HCT116 (cell line): ENCODE measurements at regions of chr2 and their contacts with region 1.

Region 1: DNA sequence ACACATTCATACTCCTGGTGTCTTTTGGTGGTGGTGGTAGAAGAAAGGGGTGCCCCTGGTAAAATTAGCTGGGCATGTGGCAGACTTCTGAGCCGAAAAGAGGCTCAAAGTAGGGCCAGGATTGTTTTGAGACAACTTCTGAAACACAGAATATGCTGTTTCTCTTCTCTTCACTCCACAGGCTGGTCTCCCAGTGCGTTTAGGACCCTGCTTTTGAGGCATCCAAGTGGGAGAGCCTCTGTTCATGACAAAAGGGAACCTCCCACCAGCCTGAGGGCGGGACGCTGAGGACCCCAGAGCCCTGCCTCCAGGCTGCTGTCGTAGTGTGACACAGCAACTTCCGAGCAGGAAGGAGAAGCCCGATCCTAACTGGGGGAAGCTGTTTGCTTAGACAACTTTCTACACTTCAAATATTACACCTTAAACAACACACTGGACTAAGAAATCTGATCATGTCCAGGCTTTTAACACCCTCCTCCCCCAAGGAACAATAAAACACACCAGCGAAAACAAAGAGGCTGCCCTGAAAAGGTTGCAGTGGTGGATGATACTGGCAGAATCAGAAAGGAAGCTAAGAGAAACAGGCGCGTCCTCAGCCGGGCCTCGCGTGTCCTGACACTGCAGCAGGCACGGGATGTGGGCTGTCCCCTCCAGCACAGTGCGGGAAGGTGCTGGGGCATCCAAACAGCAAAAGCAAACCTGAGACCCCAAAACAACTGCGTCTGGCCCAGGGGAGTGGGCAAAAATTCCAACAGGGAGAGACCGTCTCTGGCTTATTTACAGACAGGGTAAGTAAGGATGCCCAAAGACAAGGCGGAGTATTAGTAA is 9.3 kb downstream of the SERTAD2 start:
- DNase-seq: peak; percentile 59
- ATAC-seq: peak; percentile 77
- H3K4me3 ChIP-seq: peak overlapping the region; percentile 46 to 57
- H3K27ac ChIP-seq: peak overlapping the region; percentile 95
- H3K4me1 ChIP-seq: peaks cover 74 to 100% of the 10 kb centered on the region in 2 experiments
- H3K27me3 ChIP-seq: no peaks in the 10 kb centered on the region
- CTCF ChIP-seq: no peak
- POLR2A ChIP-seq: peak; percentile 47
- RAD21 ChIP-seq: no peak

Region 2: DNA sequence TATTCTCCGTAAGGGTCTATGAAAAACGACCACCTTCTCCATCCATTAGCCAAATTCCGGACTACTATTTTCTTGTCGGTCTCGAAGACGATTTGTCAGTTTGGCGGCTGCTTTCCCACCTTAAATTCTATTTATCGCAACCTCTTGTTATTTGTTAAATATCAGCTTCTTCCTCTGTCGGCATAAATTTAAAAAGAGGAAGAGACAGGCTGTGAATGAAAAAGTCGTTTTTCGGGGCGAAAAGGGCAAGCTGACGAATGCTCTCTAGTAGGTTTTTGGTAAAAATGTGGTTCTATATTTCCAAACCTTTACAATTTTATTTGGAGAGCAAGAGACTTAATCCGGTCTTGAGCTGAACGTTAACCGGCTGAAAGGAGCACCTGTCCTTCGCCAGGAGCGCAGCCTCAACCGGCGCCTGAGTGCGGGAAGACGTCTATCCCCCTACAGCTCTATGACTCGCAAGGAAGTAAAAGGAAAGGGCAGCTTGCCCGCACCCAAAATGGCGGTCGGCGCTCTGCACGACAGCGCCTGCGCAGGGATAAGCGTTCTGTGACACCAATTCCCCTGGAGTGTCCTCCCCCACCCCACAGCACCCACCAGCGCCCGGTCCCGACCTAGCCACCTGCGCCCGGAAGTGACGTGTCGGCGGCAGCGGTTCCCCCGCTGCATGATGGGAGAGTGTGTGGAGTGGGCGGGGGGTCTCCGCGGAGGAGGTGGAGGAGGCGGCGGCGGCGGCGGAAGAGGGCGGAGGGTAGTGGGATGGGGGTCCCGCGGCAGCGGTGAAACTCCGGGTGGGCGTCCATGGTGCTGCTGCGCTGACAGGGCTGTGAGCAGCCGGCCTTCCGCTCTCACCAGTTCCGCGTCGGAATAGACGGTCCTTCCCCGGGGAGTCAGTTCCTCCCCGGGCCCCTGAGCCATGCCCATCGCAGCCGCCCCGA is 120.5 kb before region 1 on chr2 and contains the start of gene AFTPH:
- CTCF ChIA-PET with region 1: interaction called, 10 read pairs
- POLR2A ChIA-PET with region 1: no interaction called
- RAD21 ChIA-PET with region 1: no interaction called
- intact Hi-C with region 1: loop called (anchors 5 kb)
- DNase-seq: peak; percentile 96
- ATAC-seq: peak; percentile 95
- H3K4me3 ChIP-seq: peak within 1 kb of the TSS; percentile 70 to 91
- H3K27ac ChIP-seq: peak within 1 kb of the TSS; percentile 78
- H3K4me1 ChIP-seq: peaks cover 6 to 20% of the 10 kb centered on the region in 2 experiments; a peak in 3 of 4 replicates
- H3K27me3 ChIP-seq: no peaks in the 10 kb centered on the region
- CTCF ChIP-seq: no peak
- POLR2A ChIP-seq: peak; percentile 75
- RAD21 ChIP-seq: no peak
- total RNA-seq, gene AFTPH: 23.6 TPM

Region 3: GRCh38 chr2:64685438-64685837 is 41.0 kb after region 1 on chr2:
- CTCF ChIA-PET with region 1: no interaction called
- POLR2A ChIA-PET with region 1: no interaction called
- RAD21 ChIA-PET with region 1: no interaction called
- intact Hi-C with region 1: no loop called
- DNase-seq: no peak
- ATAC-seq: no peak
- H3K4me3 ChIP-seq: no peak overlapping the region
- H3K27ac ChIP-seq: no peak overlapping the region
- H3K4me1 ChIP-seq: peaks cover 0 to 6% of the 10 kb centered on the region in 2 experiments; a peak in 2 of 4 replicates
- H3K27me3 ChIP-seq: no peaks in the 10 kb centered on the region
- CTCF ChIP-seq: no peak
- POLR2A ChIP-seq: no peak
- RAD21 ChIP-seq: no peak

Region 4: GRCh38 chr2:64831134-64831976 is 187.0 kb after region 1 on chr2:
- CTCF ChIA-PET with region 1: interaction called, 7 read pairs
- POLR2A ChIA-PET with region 1: interaction called, 3 read pairs
- RAD21 ChIA-PET with region 1: no interaction called
- intact Hi-C with region 1: loop called (anchors 1 kb)
- DNase-seq: peak; percentile 98
- ATAC-seq: peak; percentile 89
- H3K4me3 ChIP-seq: peak overlapping the region; percentile 21 to 44; a peak in 3 of 4 replicates
- H3K27ac ChIP-seq: peak overlapping the region; percentile 80
- H3K4me1 ChIP-seq: peaks cover 52 to 71% of the 10 kb centered on the region in 2 experiments
- H3K27me3 ChIP-seq: no peaks in the 10 kb centered on the region
- CTCF ChIP-seq: peak in 2 of 3 experiments; percentile 98 to 99; a peak in 4 of 6 replicates
- POLR2A ChIP-seq: peak; percentile 40
- RAD21 ChIP-seq: no peak

Region 5: GRCh38 chr2:64859312-64860212 is 215.2 kb after region 1 on chr2:
- CTCF ChIA-PET with region 1: interaction called, 16 read pairs
- POLR2A ChIA-PET with region 1: interaction called, 4 read pairs
- RAD21 ChIA-PET with region 1: interaction called in 1 of 2 experiments, 4 read pairs
- intact Hi-C with region 1: no loop called
- DNase-seq: peak; percentile 63
- ATAC-seq: peak; percentile 83
- H3K4me3 ChIP-seq: peak overlapping the region; percentile 34 to 47
- H3K27ac ChIP-seq: peak overlapping the region; percentile 97
- H3K4me1 ChIP-seq: peaks cover 42 to 83% of the 10 kb centered on the region in 2 experiments
- H3K27me3 ChIP-seq: no peaks in the 10 kb centered on the region
- CTCF ChIP-seq: peak in 1 of 3 experiments; percentile 19; a peak in 1 of 6 replicates
- POLR2A ChIP-seq: peak; percentile 46
- RAD21 ChIP-seq: no peak

Region 6: GRCh38 chr2:64873472-64873924 is 229.1 kb after region 1 on chr2:
- CTCF ChIA-PET with region 1: interaction called, 4 read pairs
- POLR2A ChIA-PET with region 1: no interaction called
- RAD21 ChIA-PET with region 1: no interaction called
- intact Hi-C with region 1: loop called (anchors 2 kb)
- DNase-seq: peak; percentile 51
- ATAC-seq: peak; percentile 92
- H3K4me3 ChIP-seq: no peak overlapping the region
- H3K27ac ChIP-seq: no peak overlapping the region
- H3K4me1 ChIP-seq: peaks cover 8 to 32% of the 10 kb centered on the region in 2 experiments
- H3K27me3 ChIP-seq: no peaks in the 10 kb centered on the region
- CTCF ChIP-seq: peak; percentile 74 to 92 (median 91)
- POLR2A ChIP-seq: no peak
- RAD21 ChIP-seq: peak; percentile 96